HepG2 (cell line): ENCODE measurements at regions of chr4 and their contacts with region 1.

Region 1: DNA sequence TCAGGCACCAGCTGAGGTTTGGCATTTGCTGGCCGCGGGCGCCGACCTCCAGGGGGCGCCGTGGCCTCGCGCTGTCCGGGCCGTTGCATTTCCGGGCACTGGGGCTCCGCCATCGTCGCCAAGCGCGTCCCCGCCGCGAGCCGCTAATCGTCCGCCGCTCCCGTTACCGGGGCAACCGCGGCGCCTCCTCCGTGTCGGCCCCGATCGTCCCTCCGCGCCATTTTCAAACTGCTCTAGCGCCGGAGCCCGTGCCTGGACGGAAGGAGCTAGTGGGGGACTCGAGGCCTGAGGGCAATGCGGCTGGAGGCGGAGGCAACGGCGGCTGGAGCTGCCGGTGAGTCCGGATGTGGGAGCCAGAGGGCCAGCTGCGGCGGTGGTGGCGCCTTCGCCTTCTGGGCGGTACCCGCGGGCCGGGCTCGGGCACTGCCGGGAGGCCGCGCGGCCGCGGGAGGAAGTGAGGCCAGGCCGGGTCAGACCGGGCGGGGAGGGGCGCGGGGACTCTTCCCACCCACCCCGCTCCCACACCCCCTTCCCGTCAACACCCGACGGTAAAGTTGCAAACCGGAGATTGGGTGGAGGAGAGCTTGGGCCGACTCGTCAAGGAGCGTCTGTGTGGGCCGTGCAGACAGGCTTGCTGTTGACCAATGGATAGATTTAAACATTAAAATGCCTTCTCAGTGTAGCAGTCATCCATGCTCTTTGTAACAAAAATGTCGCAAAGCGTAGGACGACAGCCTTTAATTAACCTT is at the start of gene CEP135:
- DNase-seq: peak; percentile 84
- ATAC-seq: peak; percentile 91
- H3K4me3 ChIP-seq: peak within 1 kb of the TSS; percentile 85 to 92 (median 85)
- H3K27ac ChIP-seq: peak within 1 kb of the TSS; percentile 97
- H3K4me1 ChIP-seq: peaks cover 31% of the 10 kb centered on the region
- H3K27me3 ChIP-seq: no peaks in the 10 kb centered on the region; a peak in 1 of 5 replicates
- CTCF ChIP-seq: peak; percentile 98
- EP300 ChIP-seq: peak in 1 of 2 experiments; percentile 50; a peak in 1 of 4 replicates
- POLR2A ChIP-seq: peak; percentile 56 to 72
- RAD21 ChIP-seq: peak; percentile 98
- total RNA-seq, gene CEP135: 8.4 and 8.8 TPM in 2 replicates

Region 2: GRCh38 chr4:55989766-55990165 is 40.9 kb after region 1 on chr4:
- CTCF ChIA-PET with region 1: no interaction called
- POLR2A ChIA-PET with region 1: no interaction called
- in situ Hi-C with region 1: no loop called
- intact Hi-C with region 1: loop called (anchors 5 kb)
- DNase-seq: no peak
- ATAC-seq: no peak
- H3K4me3 ChIP-seq: no peak overlapping the region
- H3K27ac ChIP-seq: no peak overlapping the region
- H3K4me1 ChIP-seq: no peaks in the 10 kb centered on the region
- H3K27me3 ChIP-seq: no peaks in the 10 kb centered on the region
- CTCF ChIP-seq: no peak
- EP300 ChIP-seq: no peak
- POLR2A ChIP-seq: no peak
- RAD21 ChIP-seq: no peak

Region 3: DNA sequence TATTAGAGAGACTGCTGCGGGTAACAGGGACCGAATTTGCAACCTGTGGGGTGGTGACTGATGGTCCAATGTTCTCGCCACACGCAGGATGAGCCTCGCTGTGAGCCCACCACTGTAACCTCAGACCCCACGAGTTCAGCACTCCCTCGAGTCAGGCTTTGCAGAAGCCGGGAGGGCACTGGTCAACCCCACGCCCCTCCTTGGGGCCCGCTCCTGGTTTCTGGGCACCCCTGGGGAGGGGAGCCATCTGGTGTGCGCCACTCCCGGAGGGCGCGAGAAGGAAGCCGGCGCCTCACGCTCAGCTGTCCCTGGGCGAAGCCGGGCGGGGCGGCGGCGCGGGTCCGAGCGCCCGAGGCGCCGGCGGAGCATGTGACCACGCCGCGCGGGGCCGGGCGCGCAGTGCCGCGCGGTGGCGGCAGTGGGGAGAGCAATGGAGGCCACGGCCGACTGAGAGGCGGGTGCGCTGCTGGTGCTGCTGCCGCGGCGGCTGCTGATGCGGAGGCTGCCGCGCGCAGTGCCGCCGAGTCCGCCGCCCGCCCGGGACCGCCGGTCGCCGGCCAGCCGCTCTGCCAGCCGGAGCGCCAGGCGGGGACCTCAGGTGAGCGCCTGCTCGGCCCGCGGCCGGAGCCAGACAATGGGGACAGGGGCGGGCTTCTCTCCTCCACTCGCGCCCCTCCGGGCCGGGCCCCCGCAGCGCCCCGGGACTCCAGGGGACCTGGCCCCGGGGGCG is 100.0 kb after region 1 on chr4:
- CTCF ChIA-PET with region 1: interaction called, 5 read pairs
- POLR2A ChIA-PET with region 1: no interaction called
- in situ Hi-C with region 1: no loop called
- intact Hi-C with region 1: loop called (anchors 2 kb)
- DNase-seq: no peak
- ATAC-seq: peak; percentile 93
- H3K4me3 ChIP-seq: peak overlapping the region; percentile 72 to 91 (median 83)
- H3K27ac ChIP-seq: peak overlapping the region; percentile 63
- H3K4me1 ChIP-seq: peaks cover 20% of the 10 kb centered on the region; the same call in 1 of the 2 replicates
- H3K27me3 ChIP-seq: peaks cover 0 to 3% of the 10 kb centered on the region in 2 experiments; a peak in 1 of 5 replicates
- CTCF ChIP-seq: peak; percentile 49
- EP300 ChIP-seq: no peak
- POLR2A ChIP-seq: 0 out of 4 replicates have a peak, but pooled peaks of 1 of the 2 experiments have one; percentile 16
- RAD21 ChIP-seq: peak; percentile 91

Region 4: DNA sequence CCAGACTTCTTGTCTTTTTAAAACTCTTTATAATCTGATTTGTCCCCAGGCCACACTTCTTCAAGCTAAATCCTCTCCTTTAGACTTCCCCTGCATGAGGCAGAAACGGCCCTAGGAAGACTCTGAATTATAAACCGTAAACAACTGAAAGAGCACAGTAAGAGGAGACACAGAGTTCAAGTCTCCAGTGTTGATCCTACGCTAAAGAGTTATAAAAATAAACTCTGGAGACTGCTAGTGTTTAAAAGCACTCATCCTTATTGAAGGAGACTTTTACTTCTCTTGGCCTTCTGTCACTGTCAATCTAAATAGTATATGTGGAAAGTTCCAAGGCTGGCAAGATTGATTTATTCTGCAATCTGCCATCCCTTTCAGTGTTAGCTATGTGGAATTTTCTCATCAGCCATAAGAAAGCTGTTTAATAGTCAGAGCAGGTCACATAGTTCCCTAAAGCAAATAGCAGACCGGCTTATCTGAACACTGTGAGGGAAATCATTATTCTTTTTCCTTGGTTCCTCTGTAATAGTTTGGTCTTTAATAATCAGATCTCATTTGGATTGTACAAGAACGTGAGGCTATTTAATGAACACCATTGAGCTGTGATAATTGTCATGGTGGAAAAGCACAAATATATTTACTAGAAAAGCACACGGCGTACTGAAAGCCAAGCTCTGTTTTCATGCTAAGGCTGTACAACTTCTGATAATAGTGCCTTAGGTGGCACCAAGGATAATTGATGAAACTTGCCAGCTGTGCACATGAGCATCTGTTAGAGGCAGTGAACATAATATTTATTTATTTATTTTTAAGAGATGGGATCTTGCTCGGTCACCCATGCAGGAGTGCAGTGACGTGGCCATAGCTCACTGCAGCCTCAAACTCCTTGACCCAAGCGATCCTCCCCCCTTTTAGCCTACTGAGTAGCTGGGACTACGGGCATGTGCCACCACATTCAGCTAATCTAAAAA is 157.6 kb after region 1 on chr4:
- CTCF ChIA-PET with region 1: no interaction called
- POLR2A ChIA-PET with region 1: no interaction called
- in situ Hi-C with region 1: no loop called
- intact Hi-C with region 1: loop called (anchors 10 kb)
- DNase-seq: no peak
- ATAC-seq: peak; percentile 36; the same call in 2 of the 3 replicates
- H3K4me3 ChIP-seq: no peak overlapping the region
- H3K27ac ChIP-seq: peak overlapping the region; percentile 25
- H3K4me1 ChIP-seq: peaks cover 52% of the 10 kb centered on the region
- H3K27me3 ChIP-seq: no peaks in the 10 kb centered on the region; a peak in 1 of 5 replicates
- CTCF ChIP-seq: no peak
- EP300 ChIP-seq: no peak
- POLR2A ChIP-seq: no peak
- RAD21 ChIP-seq: no peak

Region 5: DNA sequence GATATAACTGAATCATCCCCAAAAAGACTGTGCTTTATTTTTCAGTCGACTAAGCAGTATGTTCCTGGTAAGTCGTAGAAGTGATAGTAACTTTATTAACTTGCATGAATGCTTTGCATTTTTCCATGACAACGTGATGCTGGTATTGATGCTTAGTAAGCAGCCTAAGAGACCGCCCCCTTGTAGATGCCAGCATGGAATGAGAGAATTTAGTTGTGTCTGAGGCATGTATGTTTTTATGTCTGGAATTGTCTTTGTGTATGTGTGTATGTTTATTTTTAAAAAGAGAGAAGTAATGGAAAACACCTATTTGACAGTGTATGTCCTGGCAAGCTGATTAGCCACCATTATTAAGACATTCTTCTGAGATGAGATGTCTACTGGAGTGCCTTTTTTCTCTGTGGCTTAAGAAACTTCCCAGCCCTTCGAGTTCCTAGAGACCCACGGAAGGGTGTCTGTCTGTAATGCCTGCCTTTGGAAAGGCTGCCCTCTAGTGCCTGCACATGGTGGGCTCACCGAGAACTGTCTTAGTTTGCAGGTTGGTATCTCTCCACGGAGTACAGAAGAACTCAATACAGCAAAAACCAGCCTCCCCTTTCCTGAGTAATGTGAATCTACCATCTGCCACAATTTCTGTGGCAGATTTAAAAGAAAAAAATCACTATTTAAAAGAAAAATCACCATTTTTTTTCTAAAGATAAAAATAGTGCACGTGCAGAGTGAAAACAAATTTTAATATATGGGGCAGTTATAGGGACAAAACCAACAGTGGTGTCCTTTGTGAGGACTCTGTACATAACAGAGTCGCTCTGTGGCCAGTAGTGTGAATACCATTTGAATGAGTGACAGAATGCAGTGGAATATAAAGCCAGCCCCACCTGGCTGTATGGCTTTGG is 352.5 kb after region 1 on chr4:
- CTCF ChIA-PET with region 1: interaction called, 5 read pairs
- POLR2A ChIA-PET with region 1: interaction called, 4 read pairs
- in situ Hi-C with region 1: loop called (anchors 5 kb)
- intact Hi-C with region 1: loop called (anchors 1 kb)
- DNase-seq: peak; percentile 67
- ATAC-seq: peak; percentile 97
- H3K4me3 ChIP-seq: no peak overlapping the region
- H3K27ac ChIP-seq: no peak overlapping the region
- H3K4me1 ChIP-seq: peaks cover 28% of the 10 kb centered on the region
- H3K27me3 ChIP-seq: no peaks in the 10 kb centered on the region
- CTCF ChIP-seq: peak; percentile 94
- EP300 ChIP-seq: no peak
- POLR2A ChIP-seq: no peak
- RAD21 ChIP-seq: peak; percentile 90

Region 6: DNA sequence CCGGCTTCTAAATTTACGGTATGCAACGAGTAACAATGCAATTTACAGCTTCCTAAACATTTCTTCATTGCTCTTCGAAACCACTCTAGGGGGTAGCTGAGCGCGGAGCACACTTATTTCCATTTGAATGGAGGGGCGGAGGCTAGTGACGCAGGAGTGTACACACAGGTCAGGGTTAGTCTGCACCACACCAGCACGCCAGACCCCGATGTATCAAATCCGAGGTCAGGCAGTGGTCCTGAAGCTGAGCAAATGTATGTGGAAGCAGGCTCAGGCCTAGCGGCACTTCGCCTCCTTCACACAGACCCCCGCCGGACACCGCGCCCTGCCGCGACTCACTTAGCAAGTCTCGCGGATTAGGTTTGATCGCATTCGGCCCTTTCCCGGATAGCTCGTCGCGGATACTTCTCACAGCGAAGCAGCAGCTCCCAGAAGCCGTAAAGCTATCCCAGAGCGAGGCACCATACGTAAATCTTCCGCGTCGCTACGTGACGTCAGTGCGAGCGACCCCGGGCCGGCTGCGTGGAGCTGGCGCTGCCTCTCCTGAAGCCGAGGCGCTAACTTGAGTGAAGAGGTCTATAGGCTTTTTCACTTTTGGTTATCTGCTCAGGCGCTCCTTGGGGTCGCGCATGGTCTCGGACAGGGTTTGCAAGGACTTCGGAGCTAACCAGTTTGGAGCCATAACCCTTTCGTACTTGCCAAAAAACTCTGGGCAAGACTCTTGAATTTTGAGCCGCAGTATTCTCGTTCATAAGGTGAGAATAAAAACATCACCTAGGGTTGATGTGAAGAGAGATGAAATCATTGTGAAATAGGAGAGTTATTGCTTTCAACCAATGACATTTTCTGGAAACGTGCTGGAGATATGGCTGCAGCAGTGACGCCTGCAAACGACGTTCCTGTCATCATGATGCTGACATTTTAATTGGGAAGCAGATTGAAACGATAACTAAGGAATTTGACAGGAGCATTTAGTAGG is 438.4 kb after region 1 on chr4 and contains the start of gene AASDH:
- CTCF ChIA-PET with region 1: no interaction called
- POLR2A ChIA-PET with region 1: interaction called, 8 read pairs
- in situ Hi-C with region 1: no loop called
- intact Hi-C with region 1: loop called (anchors 5 kb)
- DNase-seq: peak; percentile 88
- ATAC-seq: peak; percentile 92
- H3K4me3 ChIP-seq: peak within 1 kb of the TSS; percentile 71 to 87 (median 85)
- H3K27ac ChIP-seq: peak within 1 kb of the TSS; percentile 97
- H3K4me1 ChIP-seq: peaks cover 28% of the 10 kb centered on the region
- H3K27me3 ChIP-seq: no peaks in the 10 kb centered on the region; a peak in 1 of 5 replicates
- CTCF ChIP-seq: 0 out of 2 replicates have a peak, but pooled peaks have one; percentile 11
- EP300 ChIP-seq: 0 out of 4 replicates have a peak, but pooled peaks of 1 of the 2 experiments have one; percentile 16
- POLR2A ChIP-seq: peak; percentile 91 to 96
- RAD21 ChIP-seq: peak; percentile 27; the same call in 1 of the 2 replicates
- total RNA-seq, gene AASDH: 12.6 and 16.8 TPM in 2 replicates